ENCODE measurements at regions of chr2 and their contacts with region 1.

Region 1: GRCh38 chr2:207497596-207497995 is 32.2 kb upstream of the CREB1 start:
- DNase-seq: no peak
- ATAC-seq: no peak
- H3K4me3 ChIP-seq: no peak overlapping the region
- H3K27ac ChIP-seq: no peak overlapping the region
- H3K4me1 ChIP-seq: peaks cover 4% of the 10 kb centered on the region; the same call in 1 of the 2 replicates
- H3K27me3 ChIP-seq: no peaks in the 10 kb centered on the region
- CTCF ChIP-seq: no peak
- EP300 ChIP-seq: no peak
- POLR2A ChIP-seq: no peak
- RAD21 ChIP-seq: no peak

Region 2: GRCh38 chr2:207484444-207485391 is 12.9 kb before region 1 on chr2:
- CTCF ChIA-PET with region 1: interaction called, 3 read pairs
- POLR2A ChIA-PET with region 1: interaction called, 8 read pairs
- RAD21 ChIA-PET with region 1: interaction called, 4 read pairs
- SMC1A ChIA-PET with region 1: interaction called, 4 read pairs
- in situ Hi-C with region 1: no loop called
- intact Hi-C with region 1: loop called (anchors 1 kb)
- DNase-seq: no peak
- ATAC-seq: peak; percentile 89
- H3K4me3 ChIP-seq: no peak overlapping the region
- H3K27ac ChIP-seq: no peak overlapping the region
- H3K4me1 ChIP-seq: peaks cover 5% of the 10 kb centered on the region
- H3K27me3 ChIP-seq: no peaks in the 10 kb centered on the region
- CTCF ChIP-seq: no peak
- EP300 ChIP-seq: no peak
- POLR2A ChIP-seq: no peak
- RAD21 ChIP-seq: 0 out of 2 replicates have a peak, but pooled peaks have one; percentile 2

Measured in GM12878 (cell line).